OCI-LY7 (cell line): ENCODE measurements at regions of chr6 and their contacts with region 1.

Region 1: DNA sequence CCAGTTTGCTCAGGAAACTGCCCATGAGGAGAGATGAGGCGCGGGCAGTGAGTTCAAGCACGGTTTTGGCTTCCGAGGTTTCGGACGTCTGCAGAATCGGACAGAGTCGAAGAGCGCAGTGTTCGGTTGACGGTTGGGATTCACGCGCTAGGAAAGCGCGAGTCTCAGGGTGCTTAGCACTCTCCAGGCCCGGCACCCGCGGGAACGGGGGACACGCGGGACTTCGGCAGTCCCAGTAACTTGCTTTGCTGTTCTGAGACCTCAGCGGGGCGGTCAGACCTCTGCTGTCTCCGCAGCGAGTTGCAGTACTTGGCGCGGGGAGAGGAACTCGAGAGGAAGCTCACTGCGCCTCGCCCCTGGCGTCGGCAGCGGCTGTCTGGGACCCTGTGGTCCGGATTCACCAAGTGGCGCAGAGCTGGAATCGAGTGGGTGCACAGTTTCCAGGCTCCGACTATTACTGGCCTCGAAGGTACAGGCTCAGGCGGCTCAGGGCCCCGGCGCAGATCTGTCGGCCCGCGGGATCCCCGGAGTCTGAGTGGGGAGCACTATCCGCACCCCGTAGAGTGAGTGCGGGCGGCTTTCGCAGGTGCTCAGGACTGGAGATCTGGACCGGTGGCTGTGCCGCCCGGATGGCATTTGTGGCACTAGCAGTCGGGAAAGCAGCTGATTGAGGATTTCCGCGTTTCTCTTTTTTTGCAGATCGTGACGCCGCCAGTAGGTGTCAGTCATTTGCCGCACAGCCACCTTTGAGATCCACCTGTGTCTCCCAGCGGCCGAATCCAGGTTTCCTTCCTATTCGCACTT is at the start of gene POM121L2:
- DNase-seq: peak; percentile 65
- H3K4me3 ChIP-seq: peak within 1 kb of the TSS; percentile 62
- H3K27ac ChIP-seq: no peak within 1 kb of the TSS
- H3K4me1 ChIP-seq: no peaks in the 10 kb centered on the region
- CTCF ChIP-seq: peak; percentile 83
- total RNA-seq, gene POM121L2: not detected in 2 replicates

Region 2: DNA sequence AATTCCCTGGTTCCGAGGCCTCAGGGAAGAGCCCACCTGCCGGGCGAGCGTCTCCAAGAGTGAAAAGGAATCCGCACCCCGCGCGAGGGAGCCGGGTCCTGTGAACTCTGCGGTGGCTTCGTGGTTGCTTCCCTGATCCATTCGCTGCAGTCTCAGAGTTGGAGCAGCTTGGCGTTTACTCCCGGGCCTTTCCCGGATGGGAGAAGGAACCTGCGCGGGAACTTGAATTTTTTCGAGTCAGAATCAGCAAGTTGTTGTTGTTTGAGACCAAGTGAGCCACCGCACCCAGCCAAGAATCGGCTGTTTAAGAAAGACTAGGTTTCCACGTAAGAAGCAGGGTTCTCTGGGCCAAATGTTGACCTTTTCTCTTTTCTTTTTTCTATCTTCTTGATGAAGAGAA is 52.0 kb before region 1 on chr6:
- CTCF ChIA-PET with region 1: no interaction called
- POLR2A ChIA-PET with region 1: no interaction called
- intact Hi-C with region 1: no loop called
- DNase-seq: no peak
- H3K4me3 ChIP-seq: no peak overlapping the region
- H3K27ac ChIP-seq: no peak overlapping the region
- H3K4me1 ChIP-seq: no peaks in the 10 kb centered on the region
- CTCF ChIP-seq: no peak

Region 3: GRCh38 chr6:27687154-27688013 is 375.0 kb after region 1 on chr6:
- CTCF ChIA-PET with region 1: no interaction called
- POLR2A ChIA-PET with region 1: no interaction called
- intact Hi-C with region 1: loop called (anchors 2 kb)
- DNase-seq: peak; percentile 87
- H3K4me3 ChIP-seq: peak overlapping the region; percentile 67
- H3K27ac ChIP-seq: peak overlapping the region; percentile 41
- H3K4me1 ChIP-seq: no peaks in the 10 kb centered on the region
- CTCF ChIP-seq: peak; percentile 83